Esophagus muscularis mucosa (tissue), 4 donors: ENCODE measurements at regions of chr17 and their contacts with region 1.

Region 1: GRCh38 chr17:1577182-1577581 is 14.6 kb upstream of the PITPNA start:
- DNase-seq: peak; percentile 98
- H3K4me3 ChIP-seq: peak overlapping the region in 3 of 4 donors; percentile 6 to 18 (median 9)
- H3K27ac ChIP-seq: peak overlapping the region; percentile 84 to 91 (median 84)
- H3K4me1 ChIP-seq: peaks cover 35 to 43% (median 42%) of the 10 kb centered on the region in 4 donors
- H3K27me3 ChIP-seq: no peaks in the 10 kb centered on the region
- CTCF ChIP-seq: peak in 1 of 3 experiments; percentile 4
- EP300 ChIP-seq: peak; percentile 6
- POLR2A ChIP-seq: no peak

Region 2: DNA sequence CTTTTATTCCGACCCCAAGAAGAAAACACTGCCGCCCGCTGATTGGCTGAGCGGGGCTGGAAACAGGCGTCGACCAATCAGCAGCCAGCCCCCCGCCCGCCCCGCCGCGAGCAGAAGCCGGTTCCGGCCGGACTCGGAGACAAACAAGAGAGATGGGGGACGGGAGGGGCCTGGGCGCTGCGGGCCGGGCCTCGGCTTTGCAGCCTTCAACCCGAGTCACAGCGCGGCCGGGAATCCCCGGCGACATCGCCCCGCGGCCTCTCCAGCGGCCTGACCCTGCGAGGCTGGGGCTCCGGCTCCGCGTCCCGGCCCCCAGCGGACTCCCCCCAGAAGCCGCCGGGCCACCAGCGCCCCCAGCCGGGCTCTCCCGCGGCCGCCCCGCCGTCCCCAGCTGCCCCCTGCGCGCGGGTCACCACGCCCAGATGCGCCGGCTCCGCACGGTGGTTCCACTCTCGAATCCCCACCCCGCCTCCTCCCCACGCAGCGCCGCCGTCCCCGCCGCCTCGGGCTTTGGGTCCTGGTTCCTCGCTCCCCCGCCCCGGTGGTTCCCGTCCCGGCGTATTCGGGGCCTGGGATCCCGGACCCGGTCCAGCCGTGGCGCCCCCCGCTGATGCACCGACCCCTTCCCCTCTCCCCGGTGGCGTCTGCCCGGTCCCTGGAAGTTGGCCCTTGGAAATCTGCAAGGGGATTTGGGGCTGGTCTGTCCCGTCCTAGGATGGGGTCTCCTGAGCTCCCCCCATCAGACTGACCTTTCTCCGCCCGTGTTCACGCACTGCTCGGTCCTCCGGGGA is 51.9 kb after region 1 on chr17:
- intact Hi-C with region 1: loop called (anchors 2 kb)
- DNase-seq: peak; percentile 99
- H3K4me3 ChIP-seq: peak overlapping the region; percentile 68 to 89 (median 80)
- H3K27ac ChIP-seq: peak overlapping the region; percentile 90 to 95 (median 90)
- H3K4me1 ChIP-seq: peaks cover 20 to 35% (median 33%) of the 10 kb centered on the region in 4 donors
- H3K27me3 ChIP-seq: no peaks in the 10 kb centered on the region
- CTCF ChIP-seq: peak; percentile 51 to 62 (median 57)
- EP300 ChIP-seq: no peak
- POLR2A ChIP-seq: peak; percentile 33

Region 3: DNA sequence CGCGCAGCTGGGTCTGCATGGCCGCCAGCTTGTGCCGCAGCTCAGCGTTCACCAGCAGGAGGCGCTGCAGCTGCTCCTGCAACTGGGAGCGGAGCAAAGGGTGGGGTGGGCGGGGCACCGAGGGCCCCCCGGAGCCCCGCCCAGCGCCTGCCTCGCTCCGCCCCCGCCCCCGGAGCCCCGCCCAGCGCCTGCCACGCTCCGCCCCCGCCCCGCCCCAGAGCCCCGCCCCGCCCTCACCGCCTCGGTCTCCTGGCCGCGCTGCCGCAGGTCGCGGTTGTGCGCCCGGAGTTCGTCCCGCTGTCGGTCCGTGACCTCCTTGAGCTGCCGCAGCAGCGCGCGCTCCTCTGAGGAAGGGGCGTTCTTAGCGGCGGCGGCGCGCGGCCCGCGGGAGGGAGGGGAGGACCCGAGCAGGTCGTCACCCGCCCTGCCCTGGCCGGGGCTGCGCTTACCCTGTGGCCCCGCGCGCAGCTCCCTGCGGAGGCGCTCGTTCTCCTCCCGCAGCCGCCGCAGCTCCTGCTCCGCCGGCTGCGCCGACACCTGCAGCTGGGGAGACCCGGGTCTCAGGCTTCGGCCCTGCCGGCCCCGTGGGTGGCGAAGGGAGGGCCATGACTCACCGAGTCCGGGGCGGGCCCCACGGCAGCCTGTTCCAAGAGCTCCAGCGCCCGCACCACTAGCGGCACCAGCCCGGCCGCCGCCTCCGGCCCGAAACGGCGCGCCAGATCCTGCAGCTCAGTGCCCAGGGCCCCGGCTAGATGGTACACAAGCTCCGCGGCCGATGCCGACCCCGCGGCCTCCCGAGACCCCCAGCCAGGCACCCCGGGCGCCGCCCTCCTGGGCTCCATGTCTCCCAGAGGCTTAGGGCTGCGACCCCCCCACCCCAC is 72.0 kb after region 1 on chr17:
- intact Hi-C with region 1: loop called (anchors 5 kb)
- DNase-seq: peak; percentile 97
- H3K4me3 ChIP-seq: peak overlapping the region; percentile 72 to 88 (median 81)
- H3K27ac ChIP-seq: peak overlapping the region; percentile 97 to 100 (median 98)
- H3K4me1 ChIP-seq: peaks cover 45 to 63% (median 61%) of the 10 kb centered on the region in 4 donors
- H3K27me3 ChIP-seq: peaks cover 0 to 3% (median 0%) of the 10 kb centered on the region in 4 donors
- CTCF ChIP-seq: peak in 2 of 3 experiments; percentile 96 to 97
- EP300 ChIP-seq: no peak
- POLR2A ChIP-seq: peak; percentile 30

Region 4: DNA sequence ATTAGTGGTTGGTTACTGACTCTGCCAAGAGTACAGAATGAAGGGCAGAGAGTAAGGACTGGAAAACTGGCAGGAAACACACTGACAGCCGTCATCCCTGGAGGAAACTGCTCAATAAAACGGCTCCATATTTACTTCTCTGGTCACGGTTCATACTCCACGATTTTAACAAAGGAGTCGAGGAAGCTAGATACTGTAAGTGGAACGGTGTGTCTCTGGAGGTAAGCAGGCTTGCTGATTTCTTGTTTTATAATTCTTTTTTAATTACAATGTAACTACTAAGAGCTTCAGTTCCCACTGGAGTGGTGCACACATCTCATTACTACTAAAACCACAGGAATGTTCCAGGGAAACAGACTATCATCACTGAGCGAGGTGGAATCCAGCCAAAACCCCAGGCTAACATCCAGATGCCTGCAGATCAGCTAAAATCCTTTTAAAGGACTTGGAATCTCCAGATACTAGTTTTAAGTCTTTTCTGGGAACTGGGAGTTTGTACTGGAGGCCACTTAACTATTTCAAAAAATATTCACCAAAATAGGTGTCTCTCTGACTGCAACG is 202.5 kb after region 1 on chr17:
- intact Hi-C with region 1: no loop called
- DNase-seq: no peak
- H3K4me3 ChIP-seq: no peak overlapping the region
- H3K27ac ChIP-seq: peak overlapping the region; percentile 83 to 90 (median 87)
- H3K4me1 ChIP-seq: peaks cover 30 to 57% (median 50%) of the 10 kb centered on the region in 4 donors
- H3K27me3 ChIP-seq: no peaks in the 10 kb centered on the region
- CTCF ChIP-seq: no peak
- EP300 ChIP-seq: no peak
- POLR2A ChIP-seq: no peak